Left colon (tissue), 2 donors: ENCODE measurements at regions of chr5 and their contacts with region 1.

Region 1: DNA sequence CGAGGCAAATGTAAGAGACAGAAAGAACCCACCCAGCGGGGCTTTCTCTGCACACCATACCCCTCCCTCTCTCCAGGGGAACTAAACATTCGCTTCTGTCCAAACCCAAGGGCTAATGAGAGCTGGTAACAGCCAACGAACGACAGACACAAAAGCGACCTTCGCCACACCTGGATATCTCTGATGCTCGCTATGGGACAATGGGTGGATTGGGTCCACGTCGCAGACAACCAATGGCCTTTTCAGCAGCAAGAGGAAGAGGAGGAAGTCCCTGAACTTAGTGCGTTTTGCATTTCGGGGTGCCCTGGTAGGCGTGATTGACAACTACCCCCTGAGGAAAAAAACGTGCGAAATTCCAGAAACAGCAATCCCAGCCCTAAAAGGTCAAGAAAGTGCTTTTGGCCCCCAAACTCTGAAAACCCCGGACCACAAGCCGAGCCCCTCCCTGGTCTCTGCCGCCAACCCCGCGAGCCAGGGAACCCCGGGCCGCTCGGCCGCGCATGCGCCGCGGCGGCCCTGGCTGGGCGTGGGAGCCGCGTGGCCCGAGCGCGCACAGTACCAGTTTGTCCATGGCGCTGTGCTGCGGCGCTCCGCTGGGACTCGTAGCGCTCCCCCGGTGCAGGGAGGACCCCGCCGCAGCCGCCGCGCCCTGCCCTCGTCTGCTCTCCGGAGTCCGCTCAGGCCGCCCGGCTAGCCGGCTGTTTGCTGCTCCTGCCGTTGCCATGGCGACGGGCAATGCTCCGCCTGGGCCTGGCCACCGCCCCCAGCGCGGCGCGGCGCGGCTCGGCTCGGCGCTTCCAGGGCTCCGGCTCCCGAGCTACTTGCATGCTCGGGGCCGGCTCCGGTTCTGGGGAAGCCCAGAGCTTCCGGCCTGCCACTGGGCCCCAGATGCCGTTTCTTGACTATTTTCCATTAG is 66.9 kb upstream of the DNAH5 start:
- DNase-seq: peak; percentile 85 to 89
- ATAC-seq: peak; percentile 94

Region 2: DNA sequence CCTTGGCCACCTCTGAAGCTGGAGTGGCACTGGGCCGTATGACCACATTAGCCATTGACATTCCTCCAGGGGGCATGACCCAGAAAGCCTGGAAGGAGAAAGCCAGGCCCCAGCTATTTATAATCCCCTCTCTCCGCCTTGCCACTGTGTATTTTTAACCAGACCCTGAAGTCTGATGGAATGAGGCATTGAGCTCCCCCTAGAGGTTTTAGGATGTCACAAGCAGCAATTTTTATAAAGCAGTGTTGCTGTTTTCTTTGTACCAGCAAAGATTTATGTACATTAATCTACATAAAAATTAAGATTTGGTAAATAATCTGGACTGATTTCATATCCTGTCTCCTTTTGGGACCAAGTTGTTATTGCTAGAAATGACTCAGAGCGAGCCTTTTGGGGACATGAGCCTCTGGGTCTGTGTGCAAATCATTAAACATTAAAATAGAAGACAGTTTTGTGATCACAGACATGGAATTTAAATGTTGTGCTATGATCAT is 258.9 kb after region 1 on chr5:
- intact Hi-C with region 1: loop called in 1 of 2 experiments (anchors 5 kb)
- DNase-seq: no peak
- ATAC-seq: peak; percentile 79

Region 3: DNA sequence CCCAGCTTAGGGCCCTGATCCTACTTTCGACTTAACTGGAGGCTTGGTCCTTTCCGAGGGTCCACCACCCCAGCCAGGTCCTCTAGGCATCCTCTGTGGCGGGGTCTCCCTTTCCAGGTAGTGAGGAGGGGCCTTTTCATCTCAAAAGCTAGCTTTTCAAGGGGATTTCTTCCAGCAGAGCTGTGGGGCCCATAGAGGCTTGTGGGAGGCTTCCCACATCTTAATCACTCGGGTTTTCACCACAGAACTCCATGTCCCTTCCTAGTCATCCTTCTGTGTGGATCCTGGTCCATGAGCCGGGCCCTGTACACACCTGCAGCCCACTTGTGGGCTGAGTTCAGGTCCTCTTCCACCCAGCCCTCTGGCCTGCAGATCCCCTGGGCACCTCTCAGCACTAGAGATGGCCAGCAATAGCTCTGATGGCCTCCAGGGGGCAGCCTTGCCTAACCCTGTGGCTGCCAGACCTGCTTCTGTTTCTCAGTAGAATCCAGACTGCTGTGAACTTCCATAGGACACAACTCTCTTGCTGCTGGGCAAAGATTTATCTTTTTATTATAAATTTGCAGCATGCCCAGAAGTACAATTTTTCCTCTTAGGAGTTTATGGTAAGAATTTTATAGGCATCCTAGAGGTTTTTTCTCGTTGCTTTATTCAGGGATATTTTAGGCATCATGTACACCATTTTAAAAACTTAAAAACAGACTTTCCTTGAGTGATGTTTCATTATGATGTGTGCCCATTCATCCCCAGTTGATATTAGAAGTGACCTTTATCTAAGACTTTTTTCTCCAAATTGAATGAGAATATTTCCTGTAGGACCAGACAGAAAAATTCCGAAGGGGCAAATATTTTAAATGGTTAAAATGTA is 340.7 kb after region 1 on chr5:
- intact Hi-C with region 1: loop called in 1 of 2 experiments (anchors 10 kb)
- DNase-seq: peak in 1 of 2 donors; percentile 59
- ATAC-seq: peak; percentile 94